ENCODE measurements at regions of chr17 and their contacts with region 1.

Region 1: GRCh38 chr17:60293580-60294335 is 98.2 kb downstream of the USP32 start:
- DNase-seq: peak in 2 of 42 donors; percentile 11 to 34

Region 2: DNA sequence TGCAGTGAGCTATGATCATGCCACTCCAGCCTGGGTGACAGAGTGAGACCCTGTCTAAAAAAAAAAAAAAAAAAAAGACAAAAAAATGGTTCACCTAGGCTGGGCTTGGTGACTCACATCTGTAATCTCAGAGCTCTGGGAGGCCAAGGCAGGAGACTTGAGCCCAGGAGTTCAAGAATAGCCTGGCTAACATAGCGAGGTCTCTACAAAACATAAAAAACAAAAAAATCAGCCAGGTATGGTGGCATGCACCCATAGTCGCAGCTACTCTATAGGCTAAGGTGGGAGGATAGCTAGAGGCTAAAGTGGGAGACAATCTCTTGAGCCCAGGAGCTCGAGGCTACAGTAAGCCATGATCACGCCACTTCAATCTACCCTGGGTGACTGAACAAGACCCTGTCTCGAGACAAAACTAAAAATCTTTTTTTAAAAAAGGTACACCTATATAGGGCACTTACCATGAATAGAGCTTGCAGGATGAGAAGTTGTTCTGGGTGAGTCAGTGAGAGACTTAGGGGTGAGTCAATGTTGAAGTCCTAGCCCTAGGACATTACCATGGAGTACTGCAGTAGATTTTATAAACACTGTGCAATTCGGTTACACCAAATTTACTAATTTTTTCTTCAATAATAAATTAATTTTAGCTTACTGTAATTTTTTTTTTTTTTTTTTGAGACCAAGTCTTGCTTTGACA is 79.2 kb after region 1 on chr17:
- intact Hi-C with region 1: no loop called
- DNase-seq: no peak

Region 3: GRCh38 chr17:60392042-60392844 is 98.5 kb after region 1 on chr17 and contains the start of gene USP32:
- intact Hi-C with region 1: loop called (anchors 2 kb)
- DNase-seq: peak; percentile 90 to 99 (median 97)